MCF 10A (cell line): ENCODE measurements at regions of chr6 and their contacts with region 1.

Region 1: DNA sequence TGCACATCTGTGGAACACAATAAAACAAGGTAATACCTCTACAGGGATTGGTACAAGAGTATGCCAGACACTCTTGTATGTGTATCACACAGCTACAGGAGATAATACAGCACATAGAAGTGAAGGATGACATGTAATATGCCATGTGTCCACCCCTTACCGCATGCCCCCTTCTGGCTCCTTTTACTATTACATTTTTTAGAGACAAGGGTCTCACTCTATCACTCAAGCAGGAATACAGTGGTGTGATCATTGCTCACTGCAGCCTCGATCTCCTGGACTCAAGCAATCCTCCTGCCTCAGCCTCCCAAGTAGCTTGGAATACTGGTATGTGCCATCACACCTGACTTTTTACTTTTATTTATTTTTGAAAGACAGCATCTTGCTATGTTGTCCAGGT is 4.2 kb upstream of the NCR3 start:
- DNase-seq: peak; percentile 56
- H3K4me3 Mint-ChIP-seq: no peak overlapping the region
- H3K27ac Mint-ChIP-seq: no peak overlapping the region
- H3K4me1 Mint-ChIP-seq: peaks cover 6% of the 10 kb centered on the region
- H3K27me3 Mint-ChIP-seq: no peaks in the 10 kb centered on the region
- CTCF ChIP-seq: peak; percentile 28

Region 2: GRCh38 chr6:31399589-31400466 is 197.2 kb before region 1 on chr6:
- CTCF ChIA-PET with region 1: interaction called, 6 read pairs
- POLR2A ChIA-PET with region 1: no interaction called
- intact Hi-C with region 1: loop called (anchors 5 kb)
- DNase-seq: peak; percentile 93
- H3K4me3 Mint-ChIP-seq: peak overlapping the region; percentile 73
- H3K27ac Mint-ChIP-seq: peak overlapping the region; percentile 83
- H3K4me1 Mint-ChIP-seq: peaks cover 24% of the 10 kb centered on the region
- H3K27me3 Mint-ChIP-seq: no peaks in the 10 kb centered on the region
- CTCF ChIP-seq: peak; percentile 93

Region 3: GRCh38 chr6:31493875-31494694 is 102.9 kb before region 1 on chr6:
- CTCF ChIA-PET with region 1: interaction called, 10 read pairs
- POLR2A ChIA-PET with region 1: interaction called, 6 read pairs
- intact Hi-C with region 1: loop called (anchors 1 kb)
- DNase-seq: peak; percentile 86
- H3K4me3 Mint-ChIP-seq: peak overlapping the region; percentile 64
- H3K27ac Mint-ChIP-seq: peak overlapping the region; percentile 37
- H3K4me1 Mint-ChIP-seq: peaks cover 36% of the 10 kb centered on the region
- H3K27me3 Mint-ChIP-seq: no peaks in the 10 kb centered on the region
- CTCF ChIP-seq: peak; percentile 81

Region 4: GRCh38 chr6:31546962-31547726 is 49.9 kb before region 1 on chr6 and contains the start of gene NFKBIL1:
- CTCF ChIA-PET with region 1: interaction called, 160 read pairs
- POLR2A ChIA-PET with region 1: interaction called, 18 read pairs
- intact Hi-C with region 1: loop called (anchors 1 kb)
- DNase-seq: peak; percentile 96
- H3K4me3 Mint-ChIP-seq: peak within 1 kb of the TSS; percentile 75
- H3K27ac Mint-ChIP-seq: peak within 1 kb of the TSS; percentile 57
- H3K4me1 Mint-ChIP-seq: peaks cover 18% of the 10 kb centered on the region
- H3K27me3 Mint-ChIP-seq: no peaks in the 10 kb centered on the region
- CTCF ChIP-seq: no peak
- total RNA-seq, gene NFKBIL1: 25.2 and 30.3 TPM in 2 replicates

Region 5: DNA sequence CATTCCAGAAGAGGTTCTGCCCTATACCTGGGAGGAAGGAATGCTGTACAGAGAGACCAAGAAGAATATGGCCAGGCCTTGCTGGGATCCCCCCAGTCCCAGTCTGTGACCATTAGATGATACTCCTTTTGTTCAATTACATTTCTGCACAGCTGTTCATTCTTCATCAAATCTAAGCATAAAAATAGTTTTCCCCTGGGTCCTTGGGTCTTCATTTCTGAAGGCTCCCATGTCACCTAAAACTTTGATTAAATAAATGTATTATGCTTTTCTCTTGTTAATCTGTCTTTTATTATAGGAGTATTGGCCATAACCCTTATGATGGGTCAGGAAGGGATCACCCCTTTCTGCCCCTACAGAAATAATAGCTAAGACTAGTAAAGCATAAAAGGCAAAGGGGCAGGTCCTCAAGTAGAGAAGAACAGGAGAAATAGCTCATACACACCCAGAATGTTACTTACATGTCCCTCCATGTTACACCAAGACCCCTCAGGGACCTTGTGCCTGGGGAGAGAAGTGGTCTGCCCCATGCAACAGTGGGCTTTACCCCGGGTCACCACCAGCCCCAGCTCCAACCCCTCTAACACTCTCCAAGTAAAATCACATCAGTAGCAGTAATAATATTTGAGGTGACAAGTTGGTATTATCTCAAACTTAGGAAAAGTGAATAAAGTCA is 27.0 kb before region 1 on chr6:
- CTCF ChIA-PET with region 1: interaction called, 215 read pairs
- POLR2A ChIA-PET with region 1: interaction called, 3 read pairs
- intact Hi-C with region 1: no loop called
- DNase-seq: no peak
- H3K4me3 Mint-ChIP-seq: no peak overlapping the region
- H3K27ac Mint-ChIP-seq: no peak overlapping the region
- H3K4me1 Mint-ChIP-seq: peaks cover 6% of the 10 kb centered on the region
- H3K27me3 Mint-ChIP-seq: peaks cover 38% of the 10 kb centered on the region
- CTCF ChIP-seq: no peak

Region 6: DNA sequence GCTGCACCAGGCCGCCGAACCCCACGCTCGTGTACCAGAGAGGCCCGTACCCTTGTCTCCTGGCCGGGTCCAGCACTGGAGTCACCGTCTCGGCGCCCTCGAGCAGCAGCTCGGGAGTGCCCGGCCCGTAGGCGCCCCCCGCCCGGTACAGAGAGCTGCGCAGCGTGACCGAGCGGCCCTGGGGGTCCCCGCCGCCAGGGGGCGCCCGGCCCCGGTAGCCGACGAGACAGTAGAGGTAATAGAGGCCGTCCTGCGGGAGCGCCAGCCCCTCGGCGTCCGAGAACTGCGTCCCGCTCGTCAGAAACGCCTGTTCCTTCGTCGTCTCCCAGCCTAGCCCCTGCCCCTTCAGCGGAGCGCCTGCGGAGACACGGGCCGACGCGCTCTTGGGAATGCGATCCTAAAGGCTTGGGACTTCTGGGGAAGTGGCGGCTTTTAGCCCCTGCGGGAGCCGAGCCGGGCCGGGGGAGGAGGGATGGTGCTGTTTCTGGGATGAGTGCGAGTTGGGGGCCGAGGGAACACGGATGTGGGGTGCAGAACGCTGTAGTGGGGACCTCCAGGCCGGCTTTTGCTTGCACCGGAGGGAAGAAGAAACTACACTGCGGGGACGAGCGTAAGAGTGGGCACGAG is 16.1 kb before region 1 on chr6:
- CTCF ChIA-PET with region 1: interaction called, 215 read pairs
- POLR2A ChIA-PET with region 1: interaction called, 6 read pairs
- intact Hi-C with region 1: loop called (anchors 1 kb)
- DNase-seq: peak; percentile 61
- H3K4me3 Mint-ChIP-seq: peak overlapping the region; percentile 96
- H3K27ac Mint-ChIP-seq: peak overlapping the region; percentile 66
- H3K4me1 Mint-ChIP-seq: peaks cover 10% of the 10 kb centered on the region
- H3K27me3 Mint-ChIP-seq: no peaks in the 10 kb centered on the region
- CTCF ChIP-seq: peak; percentile 87

Region 7: DNA sequence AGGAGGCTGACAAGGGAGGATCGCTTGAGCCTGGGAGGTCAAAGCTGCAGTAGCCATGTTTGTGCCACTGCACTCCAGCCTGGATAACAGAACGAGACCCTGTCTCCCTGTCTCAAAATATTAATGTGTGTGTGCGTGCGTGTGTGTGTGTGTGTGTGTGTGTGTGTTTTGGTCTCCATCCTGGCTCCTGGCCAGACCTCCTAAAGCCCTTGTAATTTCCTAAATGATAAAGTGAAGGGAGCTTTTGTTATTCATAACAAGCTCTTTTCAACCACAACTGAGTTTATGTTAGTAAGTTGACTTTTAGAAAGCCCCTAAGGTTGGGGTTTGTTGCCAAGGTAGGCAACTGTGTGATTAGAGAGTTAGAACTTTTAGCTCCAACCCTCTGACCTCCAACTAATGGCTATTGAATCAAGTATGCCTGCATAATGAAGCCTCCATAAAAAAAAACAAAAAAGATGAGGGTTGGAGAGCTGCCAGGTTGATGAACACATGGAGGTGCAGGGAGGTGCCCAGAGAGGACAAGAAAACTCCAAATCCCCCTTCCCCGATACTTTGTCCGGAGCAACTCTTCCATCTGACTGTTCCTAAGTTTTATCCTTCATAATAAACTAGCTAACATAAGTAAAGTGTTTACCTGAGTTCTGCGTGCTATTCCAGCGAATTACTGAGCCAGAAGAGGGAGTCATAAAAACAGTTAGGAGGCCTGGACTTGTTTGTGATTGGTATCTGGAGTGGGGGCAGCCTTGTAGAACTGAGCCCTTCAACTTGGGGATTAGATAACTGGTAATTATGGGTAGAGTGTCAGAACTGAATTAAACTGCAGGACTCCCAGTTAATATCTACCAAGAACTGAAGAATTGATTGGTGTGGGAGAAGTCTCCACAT is 12.8 kb after region 1 on chr6:
- CTCF ChIA-PET with region 1: interaction called, 18 read pairs
- POLR2A ChIA-PET with region 1: no interaction called
- intact Hi-C with region 1: no loop called
- DNase-seq: no peak
- H3K4me3 Mint-ChIP-seq: no peak overlapping the region
- H3K27ac Mint-ChIP-seq: no peak overlapping the region
- H3K4me1 Mint-ChIP-seq: no peaks in the 10 kb centered on the region
- H3K27me3 Mint-ChIP-seq: no peaks in the 10 kb centered on the region
- CTCF ChIP-seq: no peak

Region 8: GRCh38 chr6:31769684-31770371 is 172.8 kb after region 1 on chr6:
- CTCF ChIA-PET with region 1: no interaction called
- POLR2A ChIA-PET with region 1: no interaction called
- intact Hi-C with region 1: no loop called
- DNase-seq: peak; percentile 74
- H3K4me3 Mint-ChIP-seq: no peak overlapping the region
- H3K27ac Mint-ChIP-seq: no peak overlapping the region
- H3K4me1 Mint-ChIP-seq: peaks cover 5% of the 10 kb centered on the region
- H3K27me3 Mint-ChIP-seq: no peaks in the 10 kb centered on the region
- CTCF ChIP-seq: peak; percentile 65

Region 9: DNA sequence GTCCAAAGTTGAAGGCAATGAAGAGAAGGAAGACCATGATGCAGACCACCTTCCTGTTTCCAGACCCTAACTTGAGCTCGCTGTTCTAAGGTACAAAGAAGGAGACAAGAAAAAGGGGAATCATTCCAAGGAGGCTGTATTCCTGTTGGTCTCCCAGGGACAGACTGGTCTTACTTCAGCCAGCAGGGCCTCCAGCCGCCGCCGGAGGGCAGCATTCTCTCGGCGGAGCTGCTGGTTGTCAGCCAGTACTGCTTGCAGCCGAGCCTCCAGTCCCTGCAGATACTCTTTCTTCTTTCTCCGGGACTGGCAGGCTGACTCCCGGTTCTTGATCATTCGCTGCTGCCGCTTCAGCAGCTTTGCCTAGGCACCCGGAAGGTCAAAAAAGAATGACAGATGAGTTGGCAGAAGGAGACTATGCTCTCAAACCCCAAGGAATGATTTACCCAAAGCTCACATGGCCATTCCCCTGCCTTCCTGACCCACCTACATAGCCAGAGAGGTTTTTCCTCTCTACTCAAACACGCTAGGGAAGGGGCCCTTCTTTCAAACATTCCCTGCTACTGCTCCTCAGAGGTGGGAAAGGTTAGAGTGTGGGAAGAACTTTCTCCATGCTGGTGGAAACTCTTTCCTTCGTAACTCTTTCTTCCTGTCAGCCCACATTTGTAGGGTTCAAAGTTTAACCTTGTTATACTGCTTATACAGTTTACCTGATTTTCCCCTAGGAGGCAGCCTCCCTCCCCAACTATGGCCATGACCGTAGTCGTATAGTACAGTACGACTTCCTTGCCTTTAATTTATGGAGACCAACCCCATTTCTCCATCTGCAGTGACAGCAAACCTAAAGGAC is 522.0 kb after region 1 on chr6:
- CTCF ChIA-PET with region 1: no interaction called
- POLR2A ChIA-PET with region 1: no interaction called
- intact Hi-C with region 1: no loop called
- DNase-seq: peak; percentile 77
- H3K4me3 Mint-ChIP-seq: no peak overlapping the region
- H3K27ac Mint-ChIP-seq: no peak overlapping the region
- H3K4me1 Mint-ChIP-seq: peaks cover 28% of the 10 kb centered on the region
- H3K27me3 Mint-ChIP-seq: no peaks in the 10 kb centered on the region
- CTCF ChIP-seq: peak; percentile 91